Ascending aorta (tissue), 2 donors: ENCODE measurements at regions of chr7 and their contacts with region 1.

Region 1: GRCh38 chr7:127585044-127585953 is at the start of gene GCC1:
- DNase-seq: peak; percentile 67 to 96
- H3K4me3 ChIP-seq: peak within 1 kb of the TSS; percentile 75 to 79
- H3K27ac ChIP-seq: peak within 1 kb of the TSS; percentile 89 to 94
- H3K4me1 ChIP-seq: peaks cover 6 to 44% of the 10 kb centered on the region in 2 donors
- H3K27me3 ChIP-seq: no peaks in the 10 kb centered on the region
- CTCF ChIP-seq: no peak
- total RNA-seq, gene GCC1: 11.2 TPM

Region 2: GRCh38 chr7:127392566-127393367 is 192.5 kb before region 1 on chr7 and contains the start of gene ZNF800:
- intact Hi-C with region 1: loop called (anchors 1 kb)
- DNase-seq: peak; percentile 63 to 95
- H3K4me3 ChIP-seq: peak within 1 kb of the TSS; percentile 94 to 97
- H3K27ac ChIP-seq: peak within 1 kb of the TSS; percentile 98 to 99
- H3K4me1 ChIP-seq: peaks cover 9 to 15% of the 10 kb centered on the region in 2 donors
- H3K27me3 ChIP-seq: no peaks in the 10 kb centered on the region
- CTCF ChIP-seq: no peak
- total RNA-seq, gene ZNF800: 36.9 TPM

Region 3: DNA sequence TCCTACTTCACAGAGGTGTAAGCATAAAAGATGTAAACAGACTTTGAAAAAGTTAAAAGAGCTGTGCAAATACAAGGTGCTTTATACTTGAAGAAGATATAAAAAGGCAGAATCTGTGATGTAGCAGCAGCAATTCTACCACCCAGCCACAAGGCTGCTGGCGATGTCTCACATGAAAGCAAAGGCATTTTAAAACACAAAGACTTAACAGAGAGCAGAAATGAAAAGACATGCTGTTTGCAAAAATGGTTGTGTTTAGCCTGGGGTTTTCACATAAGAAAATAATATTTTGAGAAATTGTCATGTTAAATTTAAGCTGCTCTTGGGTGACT is 107.3 kb before region 1 on chr7:
- intact Hi-C with region 1: no loop called
- DNase-seq: no peak
- H3K4me3 ChIP-seq: no peak overlapping the region
- H3K27ac ChIP-seq: no peak overlapping the region
- H3K4me1 ChIP-seq: no peaks in the 10 kb centered on the region
- H3K27me3 ChIP-seq: no peaks in the 10 kb centered on the region
- CTCF ChIP-seq: no peak

Region 4: GRCh38 chr7:127651556-127652332 is 66.4 kb after region 1 on chr7 and contains the start of gene SND1:
- intact Hi-C with region 1: loop called (anchors 1 kb)
- DNase-seq: peak; percentile 99 to 100
- H3K4me3 ChIP-seq: peak within 1 kb of the TSS; percentile 73 to 89
- H3K27ac ChIP-seq: peak within 1 kb of the TSS; percentile 93 to 96
- H3K4me1 ChIP-seq: peaks cover 0 to 24% of the 10 kb centered on the region in 2 donors
- H3K27me3 ChIP-seq: no peaks in the 10 kb centered on the region
- CTCF ChIP-seq: no peak
- total RNA-seq, gene SND1: 93.8 TPM

Region 5: DNA sequence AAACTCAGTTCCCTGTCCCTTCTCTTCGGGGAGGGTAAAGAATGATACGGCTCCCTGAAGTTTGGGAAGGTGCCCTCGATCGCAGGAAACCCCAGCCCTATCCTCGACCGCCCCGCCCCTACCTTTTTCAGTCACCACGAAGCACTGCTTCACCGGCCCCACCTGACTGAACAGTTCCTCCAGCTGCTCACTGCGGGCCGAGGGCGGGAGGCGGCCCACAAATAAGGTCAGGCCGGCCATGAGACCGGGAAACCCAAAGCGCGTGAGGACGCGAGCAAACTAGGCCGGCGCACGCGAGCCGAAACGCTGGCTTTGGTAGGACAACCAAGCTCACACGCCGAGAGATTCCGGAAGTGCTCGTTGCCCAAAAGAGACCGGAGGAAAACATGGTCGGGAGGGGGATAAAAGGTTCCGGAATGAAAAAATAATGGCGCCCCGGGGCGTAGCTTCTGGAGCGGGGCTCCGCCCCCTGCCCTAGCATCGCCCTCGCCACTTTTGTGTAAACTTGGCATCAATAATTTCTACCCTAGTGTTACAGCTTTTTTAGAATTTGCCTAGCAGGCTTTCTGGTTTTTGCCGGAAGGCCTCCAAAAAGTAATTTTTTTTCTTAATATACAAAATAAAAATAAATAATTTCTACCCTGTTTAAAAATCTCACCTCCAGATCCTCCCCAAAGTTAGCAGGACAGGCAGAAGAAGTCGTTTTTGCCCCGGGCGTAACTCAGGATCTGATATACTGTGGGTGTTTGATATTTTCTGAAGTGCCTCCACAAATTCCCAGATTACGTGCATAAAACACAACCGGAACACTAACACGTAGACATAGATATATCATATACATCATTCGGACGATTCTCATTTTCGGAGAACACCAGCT is 758.5 kb after region 1 on chr7 and contains the start of gene RBM28:
- intact Hi-C with region 1: loop called (anchors 10 kb)
- DNase-seq: peak; percentile 59 to 92
- H3K4me3 ChIP-seq: peak within 1 kb of the TSS; percentile 61 to 76
- H3K27ac ChIP-seq: peak within 1 kb of the TSS; percentile 66 to 69
- H3K4me1 ChIP-seq: peaks cover 4 to 13% of the 10 kb centered on the region in 2 donors
- H3K27me3 ChIP-seq: no peaks in the 10 kb centered on the region
- CTCF ChIP-seq: no peak
- total RNA-seq, gene RBM28: 23.8 TPM

Region 6: GRCh38 chr7:129224251-129225205 is 1639.2 kb after region 1 on chr7 and contains the start of gene AHCYL2:
- intact Hi-C with region 1: loop called (anchors 5 kb)
- DNase-seq: peak; percentile 91 to 99
- H3K4me3 ChIP-seq: peak within 1 kb of the TSS; percentile 93 to 99
- H3K27ac ChIP-seq: peak within 1 kb of the TSS; percentile 88 to 96
- H3K4me1 ChIP-seq: peaks cover 0 to 9% of the 10 kb centered on the region in 2 donors
- H3K27me3 ChIP-seq: no peaks in the 10 kb centered on the region
- CTCF ChIP-seq: no peak
- total RNA-seq, gene AHCYL2: 62.9 TPM